Activated CD8-positive, alpha-beta T cell treated with anti-CD3 and anti-CD28 coated beads for 36 hours (primary cell): ENCODE measurements at regions of chr3 and their contacts with region 1.

Region 1: GRCh38 chr3:179604321-179605078 is at the starts of genes MRPL47 and NDUFB5:
- DNase-seq: peak; percentile 96
- ATAC-seq: peak; percentile 93
- H3K4me3 Mint-ChIP-seq: peak within 1 kb of the TSS; percentile 97
- H3K27ac Mint-ChIP-seq: peak within 1 kb of the TSS; percentile 100
- H3K4me1 Mint-ChIP-seq: peaks cover 31% of the 10 kb centered on the region
- H3K27me3 Mint-ChIP-seq: no peaks in the 10 kb centered on the region
- CTCF ChIP-seq: no peak
- total RNA-seq, gene MRPL47: 57.7 to 62.4 TPM
- total RNA-seq, gene NDUFB5: 110 to 113 TPM

Region 2: DNA sequence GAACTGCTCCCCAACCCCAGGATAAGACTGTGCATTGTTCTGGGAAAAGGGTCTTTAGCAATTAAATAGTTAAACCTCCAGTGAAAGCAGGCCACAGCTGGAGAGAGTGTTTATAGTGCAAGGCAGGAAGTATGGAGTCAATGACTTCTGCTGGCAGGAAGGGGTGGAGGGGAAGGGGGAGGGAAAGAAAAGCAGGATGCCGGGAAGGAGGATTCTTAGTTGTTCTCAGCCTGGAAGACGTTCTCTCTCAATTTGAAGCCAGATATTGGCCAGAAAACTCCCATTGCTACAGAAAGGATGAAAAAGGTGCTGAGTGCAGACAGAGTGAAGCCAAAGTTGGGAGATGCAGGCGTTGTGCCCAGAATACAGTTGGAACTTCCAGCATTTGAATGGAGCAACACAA is 77.5 kb before region 1 on chr3:
- CTCF ChIA-PET with region 1: no interaction called
- POLR2A ChIA-PET with region 1: no interaction called
- intact Hi-C with region 1: no loop called
- DNase-seq: no peak
- ATAC-seq: no peak
- H3K4me3 Mint-ChIP-seq: no peak overlapping the region
- H3K27ac Mint-ChIP-seq: no peak overlapping the region
- H3K4me1 Mint-ChIP-seq: no peaks in the 10 kb centered on the region
- H3K27me3 Mint-ChIP-seq: peaks cover 3% of the 10 kb centered on the region
- CTCF ChIP-seq: no peak

Region 3: DNA sequence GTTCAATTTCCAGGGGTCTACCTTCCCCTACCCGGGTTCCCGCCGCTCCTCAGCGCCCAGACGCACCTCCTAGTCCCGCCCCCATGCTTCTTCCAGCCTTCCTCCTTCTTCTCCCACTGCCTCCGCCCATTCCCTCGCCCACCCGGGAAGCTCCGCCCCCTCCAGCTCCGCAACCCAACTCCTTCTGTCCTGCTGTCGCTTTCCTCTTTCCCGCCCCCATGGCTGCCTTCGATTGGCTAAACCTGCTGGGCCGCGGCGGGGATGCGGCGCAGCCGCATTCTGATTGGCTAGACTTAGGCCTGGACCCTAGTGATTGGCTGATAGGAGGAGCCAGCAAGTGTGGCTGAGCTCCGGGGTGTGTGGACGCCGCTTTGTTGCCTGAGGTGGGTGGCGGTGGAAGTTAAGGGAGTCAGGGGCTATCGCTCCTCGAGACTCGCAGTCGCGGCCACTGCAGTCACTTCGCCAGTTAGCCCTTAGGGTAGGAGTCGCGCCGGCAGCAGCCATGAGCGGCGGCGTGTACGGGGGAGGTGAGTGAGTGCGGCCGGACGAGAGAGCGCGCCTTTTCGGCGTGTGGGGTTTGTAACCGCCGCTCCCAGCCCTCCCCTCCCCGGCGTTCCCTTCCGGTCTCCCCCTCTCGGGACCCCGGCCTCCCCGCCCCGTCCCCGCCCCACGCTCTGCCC is 41.8 kb before region 1 on chr3 and contains the start of gene ACTL6A:
- CTCF ChIA-PET with region 1: interaction called, 6 read pairs
- POLR2A ChIA-PET with region 1: interaction called, 6 read pairs
- intact Hi-C with region 1: loop called (anchors 5 kb)
- DNase-seq: peak; percentile 99
- ATAC-seq: peak; percentile 91
- H3K4me3 Mint-ChIP-seq: peak within 1 kb of the TSS; percentile 86
- H3K27ac Mint-ChIP-seq: peak within 1 kb of the TSS; percentile 99
- H3K4me1 Mint-ChIP-seq: peaks cover 28% of the 10 kb centered on the region
- H3K27me3 Mint-ChIP-seq: peaks cover 3% of the 10 kb centered on the region
- CTCF ChIP-seq: no peak
- total RNA-seq, gene ACTL6A: 87.1 to 88.4 TPM

Region 4: GRCh38 chr3:179653096-179653797 is 48.7 kb after region 1 on chr3:
- CTCF ChIA-PET with region 1: interaction called, 3 read pairs
- POLR2A ChIA-PET with region 1: interaction called, 3 read pairs
- intact Hi-C with region 1: loop called (anchors 5 kb)
- DNase-seq: peak; percentile 68
- ATAC-seq: peak; percentile 70
- H3K4me3 Mint-ChIP-seq: peak overlapping the region; percentile 95
- H3K27ac Mint-ChIP-seq: peak overlapping the region; percentile 93
- H3K4me1 Mint-ChIP-seq: peaks cover 20% of the 10 kb centered on the region
- H3K27me3 Mint-ChIP-seq: peaks cover 10% of the 10 kb centered on the region
- CTCF ChIP-seq: no peak